ENCODE measurements at regions of chr20 and their contacts with region 1.

Region 1: DNA sequence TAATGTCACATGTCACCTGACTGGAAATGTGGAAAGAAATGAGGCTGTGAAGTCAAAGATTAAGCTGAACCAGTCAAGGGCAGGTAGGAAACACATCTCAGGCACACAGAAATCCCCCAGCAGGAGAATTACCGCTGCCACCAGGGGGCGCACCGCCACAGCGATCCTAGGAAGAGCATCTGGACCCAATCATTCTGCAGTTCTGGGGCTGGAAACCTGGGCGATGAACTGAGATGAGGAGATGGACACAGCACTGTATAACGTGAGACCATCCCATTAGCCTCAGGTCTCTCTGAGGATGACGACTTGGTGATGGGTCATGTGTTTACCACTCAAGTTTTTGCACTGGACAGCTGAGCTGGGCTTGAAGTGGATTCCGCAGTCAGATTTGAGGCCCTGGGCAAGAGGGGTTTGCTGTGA is 6.5 kb upstream of the SLC24A3 start:
- DNase-seq: no peak
- H3K4me3 ChIP-seq: no peak overlapping the region
- H3K27me3 ChIP-seq: peaks cover under 1% of the 10 kb centered on the region
- CTCF ChIP-seq: peak; percentile 87

Region 2: DNA sequence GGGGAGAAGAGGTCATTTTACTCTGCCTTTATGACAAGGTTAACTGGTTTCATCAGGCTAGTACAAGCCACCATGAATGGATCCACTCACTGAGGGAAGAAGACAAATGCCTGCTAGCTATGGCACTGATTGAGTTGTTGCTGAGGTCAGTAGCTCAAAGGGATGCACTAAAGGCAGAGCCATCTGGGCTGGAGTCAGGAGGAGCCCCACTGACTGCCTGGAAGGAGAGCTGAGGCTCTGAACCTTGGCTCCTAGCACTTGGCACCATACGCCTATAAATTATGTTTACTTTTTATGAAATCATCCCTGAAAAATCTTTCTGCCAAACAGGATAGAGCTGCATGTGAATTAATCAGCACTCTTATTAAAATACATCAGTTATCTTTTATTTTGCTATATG is 513.5 kb before region 1 on chr20:
- CTCF ChIA-PET with region 1: no interaction called
- POLR2A ChIA-PET with region 1: no interaction called
- DNase-seq: no peak
- H3K4me3 ChIP-seq: no peak overlapping the region
- H3K27me3 ChIP-seq: no peaks in the 10 kb centered on the region
- CTCF ChIP-seq: no peak

Region 3: GRCh38 chr20:19193349-19193748 is 12.6 kb before region 1 on chr20:
- CTCF ChIA-PET with region 1: interaction called, 11 read pairs
- POLR2A ChIA-PET with region 1: no interaction called
- DNase-seq: no peak
- H3K4me3 ChIP-seq: no peak overlapping the region
- H3K27me3 ChIP-seq: no peaks in the 10 kb centered on the region
- CTCF ChIP-seq: no peak

Region 4: GRCh38 chr20:19252670-19253120 is 46.7 kb after region 1 on chr20:
- CTCF ChIA-PET with region 1: interaction called, 10 read pairs
- POLR2A ChIA-PET with region 1: no interaction called
- DNase-seq: peak; percentile 33
- H3K4me3 ChIP-seq: no peak overlapping the region
- H3K27me3 ChIP-seq: no peaks in the 10 kb centered on the region
- CTCF ChIP-seq: no peak

Region 5: DNA sequence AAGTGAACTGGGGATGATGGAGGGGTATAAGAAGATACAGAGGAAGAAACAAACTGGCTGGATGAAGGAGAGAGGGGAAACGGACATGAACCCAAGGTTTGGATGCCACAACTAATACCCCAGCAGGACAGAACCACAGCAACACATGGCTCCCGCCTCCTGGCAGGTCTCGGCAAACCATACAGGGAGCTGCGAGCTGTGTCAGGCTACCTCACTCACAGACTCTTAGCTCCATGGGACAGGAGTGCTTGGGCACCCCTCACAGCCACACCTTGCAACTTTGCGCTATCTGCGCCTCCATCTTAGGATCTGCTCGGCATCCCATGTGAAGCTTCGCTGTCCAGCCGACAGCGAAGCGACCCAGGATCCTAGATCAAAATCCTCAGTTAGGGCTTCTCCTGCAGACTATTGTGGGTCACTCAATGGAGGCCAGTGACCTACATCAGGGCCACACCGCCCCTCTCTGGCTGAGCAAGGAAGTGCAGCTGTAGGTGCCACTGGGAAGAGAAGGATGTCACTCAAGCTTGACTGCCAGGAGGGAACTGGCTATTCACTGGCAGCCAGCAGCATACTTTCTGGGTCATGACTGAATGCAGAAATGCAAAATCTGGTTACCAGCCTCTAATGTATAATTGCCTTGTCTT is 377.7 kb after region 1 on chr20:
- CTCF ChIA-PET with region 1: interaction called, 145 read pairs
- POLR2A ChIA-PET with region 1: no interaction called
- DNase-seq: no peak
- H3K4me3 ChIP-seq: no peak overlapping the region
- H3K27me3 ChIP-seq: no peaks in the 10 kb centered on the region
- CTCF ChIP-seq: peak; percentile 87